Tibial artery (tissue), 4 donors: ENCODE measurements at regions of chr19 and their contacts with region 1.

Region 1: GRCh38 chr19:5031231-5032100 is 62.6 kb downstream of the KDM4B start:
- DNase-seq: peak; percentile 80 to 87
- H3K4me3 ChIP-seq: no peak overlapping the region
- H3K27ac ChIP-seq: no peak overlapping the region
- H3K4me1 ChIP-seq: peaks cover 4 to 38% (median 18%) of the 10 kb centered on the region in 4 donors
- H3K27me3 ChIP-seq: no peaks in the 10 kb centered on the region
- CTCF ChIP-seq: peak; percentile 91 to 92

Region 2: DNA sequence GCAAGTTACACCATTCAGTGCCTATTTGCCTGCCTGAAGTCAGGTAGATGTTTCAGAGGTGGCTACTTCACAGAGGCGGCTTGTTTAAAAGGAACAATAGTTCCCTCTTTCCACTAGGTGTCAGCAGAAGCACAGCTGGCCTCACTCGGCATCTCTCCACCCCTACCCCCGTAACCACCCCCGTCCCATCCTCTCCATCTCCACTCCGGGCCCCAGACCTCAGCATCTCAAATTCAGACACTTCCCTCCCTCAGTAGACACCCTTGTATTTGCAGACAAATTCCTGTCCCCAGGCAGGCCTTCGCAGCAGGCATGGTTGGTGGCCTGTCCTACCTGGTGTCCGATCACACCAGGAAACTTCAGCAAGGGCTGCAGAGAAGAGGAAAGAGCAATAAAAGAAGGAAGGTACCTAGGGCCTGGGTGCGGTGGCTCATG is 298.8 kb before region 1 on chr19:
- intact Hi-C with region 1: loop called (anchors 10 kb)
- DNase-seq: no peak
- H3K4me3 ChIP-seq: no peak overlapping the region
- H3K27ac ChIP-seq: no peak overlapping the region
- H3K4me1 ChIP-seq: peaks cover 0 to 7% (median 0%) of the 10 kb centered on the region in 4 donors
- H3K27me3 ChIP-seq: peaks cover 0 to 27% of the 10 kb centered on the region in 2 donors
- CTCF ChIP-seq: peak; percentile 57 to 68

Region 3: GRCh38 chr19:4811328-4812131 is 219.9 kb before region 1 on chr19:
- intact Hi-C with region 1: loop called (anchors 5 kb)
- DNase-seq: peak; percentile 81 to 85
- H3K4me3 ChIP-seq: no peak overlapping the region
- H3K27ac ChIP-seq: peak overlapping the region; percentile 83 to 84
- H3K4me1 ChIP-seq: peaks cover 0 to 50% (median 30%) of the 10 kb centered on the region in 4 donors
- H3K27me3 ChIP-seq: no peaks in the 10 kb centered on the region
- CTCF ChIP-seq: peak; percentile 78 to 88

Region 4: DNA sequence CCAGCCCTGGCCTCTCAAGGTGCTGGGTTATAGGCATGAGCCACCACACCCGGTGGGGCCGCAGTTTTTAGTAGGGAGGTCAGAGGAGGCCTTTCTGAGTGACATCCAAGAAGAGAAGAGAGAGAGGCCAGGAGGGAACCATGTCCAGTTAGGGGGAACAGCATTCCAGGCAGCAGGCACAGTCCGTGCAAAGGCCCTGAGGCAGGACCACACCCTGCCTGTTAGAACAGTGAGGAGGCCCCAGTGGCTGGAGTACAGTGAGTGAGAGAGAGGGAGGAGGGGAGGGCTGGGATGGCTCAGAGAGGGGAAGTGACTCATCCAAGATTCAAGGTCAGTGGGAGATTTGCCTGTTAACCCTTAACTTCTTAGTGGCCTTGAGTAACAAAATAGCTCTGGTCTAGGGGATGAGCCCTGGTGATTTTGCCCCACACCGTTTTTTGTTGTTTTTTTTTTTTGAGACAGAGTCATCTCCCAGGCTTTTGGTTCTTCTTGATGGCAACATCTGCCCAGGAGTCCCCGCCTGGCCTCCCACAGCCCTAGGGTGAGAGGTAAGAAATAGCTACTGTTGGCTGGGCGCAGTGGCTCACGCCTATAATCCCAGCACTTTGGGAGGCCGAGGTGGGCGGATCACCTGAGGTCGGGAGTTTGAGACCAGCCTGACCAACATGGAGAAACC is 161.3 kb before region 1 on chr19:
- intact Hi-C with region 1: loop called (anchors 2 kb)
- DNase-seq: no peak
- H3K4me3 ChIP-seq: no peak overlapping the region
- H3K27ac ChIP-seq: no peak overlapping the region
- H3K4me1 ChIP-seq: peaks cover 0 to 16% (median 12%) of the 10 kb centered on the region in 4 donors
- H3K27me3 ChIP-seq: no peaks in the 10 kb centered on the region
- CTCF ChIP-seq: no peak